ENCODE measurements at regions of chr11 and their contacts with region 1.

Region 1: GRCh38 chr11:102171101-102171500 is 60.9 kb downstream of the YAP1 start:
- DNase-seq: peak; percentile 84
- ATAC-seq: peak; percentile 61
- H3K4me3 ChIP-seq: peak overlapping the region; percentile 21
- H3K27ac ChIP-seq: peak overlapping the region; percentile 54
- H3K4me1 ChIP-seq: peaks cover 51% of the 10 kb centered on the region
- H3K27me3 ChIP-seq: no peaks in the 10 kb centered on the region
- CTCF ChIP-seq: no peak

Region 2: GRCh38 chr11:101428918-101429317 is 742.2 kb before region 1 on chr11:
- CTCF ChIA-PET with region 1: interaction called, 21 read pairs
- POLR2A ChIA-PET with region 1: no interaction called
- intact Hi-C with region 1: no loop called
- DNase-seq: peak; percentile 70
- ATAC-seq: peak; percentile 85
- H3K4me3 ChIP-seq: no peak overlapping the region
- H3K27ac ChIP-seq: no peak overlapping the region
- H3K4me1 ChIP-seq: peaks cover 7% of the 10 kb centered on the region
- H3K27me3 ChIP-seq: no peaks in the 10 kb centered on the region
- CTCF ChIP-seq: peak; percentile 82

Region 3: DNA sequence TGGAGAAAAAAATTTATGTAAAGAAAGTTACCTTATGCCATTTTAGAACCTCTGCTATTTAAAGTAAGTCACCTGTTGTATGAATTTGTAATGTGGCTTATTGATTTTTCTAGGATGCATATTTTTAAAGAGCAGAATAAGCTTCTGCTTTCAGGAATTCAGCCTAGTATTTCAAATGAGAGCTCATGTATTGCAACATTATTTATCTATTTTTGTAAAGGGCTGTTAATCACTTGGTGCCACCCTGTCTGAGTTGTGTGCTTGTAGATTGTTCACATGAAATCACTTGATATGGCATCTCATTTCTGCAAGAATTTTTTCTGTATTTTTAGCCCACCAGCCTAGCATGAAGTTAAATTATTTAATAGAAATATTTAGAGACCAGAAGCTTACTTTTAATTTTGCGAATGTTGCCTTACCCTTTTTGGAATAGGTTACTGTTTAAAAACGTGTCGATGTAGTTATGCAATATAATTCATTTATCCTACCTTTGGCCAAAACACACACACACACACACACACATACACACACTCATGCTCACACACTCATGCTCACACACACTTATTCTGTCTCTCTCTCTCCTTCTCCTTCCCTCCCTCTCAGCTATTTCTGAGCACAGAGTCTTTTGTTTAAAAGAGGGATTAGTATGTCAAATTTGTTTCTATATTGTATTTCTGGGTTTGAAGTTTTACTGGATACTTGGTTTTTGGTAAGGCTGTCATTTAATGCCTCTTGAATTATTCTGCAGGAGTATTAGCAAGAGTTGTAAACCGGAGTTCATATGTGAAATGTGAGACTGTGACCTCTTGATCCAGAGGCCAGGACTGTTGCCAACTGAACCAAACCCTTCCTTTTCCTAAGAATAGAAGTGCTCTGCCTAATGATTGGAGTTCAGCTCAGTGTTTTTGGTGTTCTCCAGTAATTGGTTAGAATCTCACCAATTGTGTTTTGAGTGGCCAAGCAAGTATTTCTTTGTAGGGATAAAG is 26.5 kb before region 1 on chr11:
- CTCF ChIA-PET with region 1: no interaction called
- POLR2A ChIA-PET with region 1: no interaction called
- intact Hi-C with region 1: loop called (anchors 2 kb)
- DNase-seq: peak; percentile 55
- ATAC-seq: peak; percentile 63
- H3K4me3 ChIP-seq: no peak overlapping the region
- H3K27ac ChIP-seq: no peak overlapping the region
- H3K4me1 ChIP-seq: peaks cover 17% of the 10 kb centered on the region
- H3K27me3 ChIP-seq: no peaks in the 10 kb centered on the region
- CTCF ChIP-seq: no peak

Region 4: DNA sequence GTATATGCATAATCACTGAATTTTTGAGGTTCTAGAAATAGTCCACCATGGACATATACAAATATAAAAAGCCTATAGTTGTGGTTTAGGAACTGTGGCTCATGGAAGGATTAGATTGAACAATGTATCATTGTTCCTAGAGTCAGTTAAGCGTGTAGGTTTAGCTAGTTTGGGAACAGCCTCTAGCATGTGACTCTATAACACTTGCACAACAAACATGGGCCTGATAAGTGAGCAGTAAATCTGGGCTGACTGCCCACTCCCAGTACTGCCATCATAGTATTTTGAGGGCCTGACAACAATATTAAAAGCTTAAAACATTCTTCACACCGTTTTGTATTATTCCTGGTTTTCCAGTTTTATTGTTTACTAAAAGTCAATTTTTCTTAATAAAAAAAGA is 13.9 kb before region 1 on chr11:
- CTCF ChIA-PET with region 1: no interaction called
- POLR2A ChIA-PET with region 1: no interaction called
- intact Hi-C with region 1: loop called (anchors 1 kb)
- DNase-seq: peak; percentile 83
- ATAC-seq: peak; percentile 85
- H3K4me3 ChIP-seq: no peak overlapping the region
- H3K27ac ChIP-seq: peak overlapping the region; percentile 7
- H3K4me1 ChIP-seq: peaks cover 33% of the 10 kb centered on the region
- H3K27me3 ChIP-seq: no peaks in the 10 kb centered on the region
- CTCF ChIP-seq: no peak

Region 5: GRCh38 chr11:102220728-102221467 is 49.8 kb after region 1 on chr11:
- CTCF ChIA-PET with region 1: no interaction called
- POLR2A ChIA-PET with region 1: no interaction called
- intact Hi-C with region 1: no loop called
- DNase-seq: peak; percentile 70
- ATAC-seq: peak; percentile 16; the same call in 1 of the 2 replicates
- H3K4me3 ChIP-seq: no peak overlapping the region
- H3K27ac ChIP-seq: peak overlapping the region; percentile 14; the same call in 1 of the 2 replicates
- H3K4me1 ChIP-seq: peaks cover 25% of the 10 kb centered on the region
- H3K27me3 ChIP-seq: no peaks in the 10 kb centered on the region
- CTCF ChIP-seq: no peak

Measured in PC-3 (cell line).